ENCODE measurements at regions of chr10 and their contacts with region 1.

Region 1: DNA sequence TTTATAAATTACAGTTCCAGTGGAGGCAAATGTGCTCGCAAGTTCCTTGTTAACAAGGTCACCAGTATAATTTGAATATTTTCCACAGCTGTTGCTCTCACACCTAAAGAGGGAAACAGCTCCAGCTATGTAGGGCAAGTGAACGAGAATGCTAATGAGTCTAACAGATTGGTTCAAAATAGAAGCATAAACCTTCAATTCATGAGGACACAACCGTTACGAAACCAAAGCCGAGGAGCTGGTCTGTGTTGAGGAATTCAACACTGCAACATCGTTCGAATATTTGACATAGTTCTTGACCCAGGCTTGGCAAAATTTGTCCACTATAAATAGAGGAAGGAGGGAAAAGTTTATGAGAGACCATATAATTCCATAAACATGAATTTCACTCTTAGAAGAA is 161.3 kb downstream of the KLF6 start:
- DNase-seq: no peak
- ATAC-seq: no peak
- H3K4me3 Mint-ChIP-seq: no peak overlapping the region
- H3K27ac Mint-ChIP-seq: peak overlapping the region; percentile 14
- H3K4me1 Mint-ChIP-seq: peaks cover 30% of the 10 kb centered on the region
- H3K27me3 Mint-ChIP-seq: no peaks in the 10 kb centered on the region

Region 2: GRCh38 chr10:3605882-3606281 is 17.9 kb before region 1 on chr10:
- CTCF ChIA-PET with region 1: no interaction called
- POLR2A ChIA-PET with region 1: no interaction called
- intact Hi-C with region 1: loop called (anchors 1 to 2 kb)
- DNase-seq: peak; percentile 12
- ATAC-seq: no peak
- H3K4me3 Mint-ChIP-seq: no peak overlapping the region
- H3K27ac Mint-ChIP-seq: no peak overlapping the region
- H3K4me1 Mint-ChIP-seq: peaks cover 15% of the 10 kb centered on the region
- H3K27me3 Mint-ChIP-seq: peaks cover 2% of the 10 kb centered on the region

Region 3: DNA sequence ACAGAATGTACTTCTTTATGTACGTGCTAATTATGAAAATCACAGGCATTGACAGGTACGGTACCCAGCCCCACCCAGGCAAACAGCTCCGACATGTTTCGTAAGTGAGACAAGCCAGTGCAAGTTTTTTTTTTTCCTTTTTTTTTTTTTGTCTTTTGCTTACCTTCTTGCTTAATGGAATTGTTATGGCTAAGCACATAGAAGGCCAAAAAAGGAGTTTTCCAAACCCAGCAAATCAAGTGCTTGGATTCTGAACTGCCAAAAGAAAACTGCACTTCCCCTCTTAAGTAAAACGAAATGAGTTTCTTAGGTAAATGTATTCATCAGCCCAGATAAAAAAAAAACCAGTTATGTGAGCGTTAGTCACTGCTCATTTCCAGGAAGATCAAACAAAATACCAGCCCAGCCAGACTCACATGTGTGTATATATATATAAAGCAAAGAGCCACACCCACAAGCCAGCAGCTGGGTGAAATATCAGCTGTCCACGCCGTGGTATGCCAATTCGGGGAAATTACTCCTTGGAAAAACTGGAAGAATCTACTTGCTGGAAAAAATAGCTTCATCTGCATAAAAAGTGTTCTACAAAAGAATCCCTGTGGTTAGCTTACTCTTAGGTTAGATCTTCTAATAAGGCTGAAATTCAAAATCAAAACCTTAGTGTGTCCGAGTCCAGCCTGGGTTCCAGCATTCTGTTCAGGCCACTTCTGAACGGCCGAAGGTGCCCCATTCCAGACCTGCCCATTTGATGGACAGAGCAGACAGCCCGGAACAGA is 153.2 kb after region 1 on chr10:
- CTCF ChIA-PET with region 1: no interaction called
- POLR2A ChIA-PET with region 1: interaction called, 3 read pairs
- intact Hi-C with region 1: loop called (anchors 1 to 2 kb)
- DNase-seq: peak; percentile 71
- ATAC-seq: peak; percentile 68
- H3K4me3 Mint-ChIP-seq: peak overlapping the region; percentile 62
- H3K27ac Mint-ChIP-seq: peak overlapping the region; percentile 90
- H3K4me1 Mint-ChIP-seq: peaks cover 67% of the 10 kb centered on the region
- H3K27me3 Mint-ChIP-seq: no peaks in the 10 kb centered on the region

Region 4: GRCh38 chr10:3867454-3868270 is 243.9 kb after region 1 on chr10:
- CTCF ChIA-PET with region 1: no interaction called
- POLR2A ChIA-PET with region 1: no interaction called
- intact Hi-C with region 1: loop called in 1 of 2 experiments (anchors 2 kb)
- DNase-seq: peak; percentile 60
- ATAC-seq: peak; percentile 76
- H3K4me3 Mint-ChIP-seq: peak overlapping the region; percentile 10
- H3K27ac Mint-ChIP-seq: peak overlapping the region; percentile 81
- H3K4me1 Mint-ChIP-seq: peaks cover 69% of the 10 kb centered on the region
- H3K27me3 Mint-ChIP-seq: no peaks in the 10 kb centered on the region

Measured in activated CD4-positive, alpha-beta T cell treated with anti-CD3 and anti-CD28 coated beads for 36 hours (primary cell).